ENCODE measurements at regions of chr17 and their contacts with region 1.

Region 1: DNA sequence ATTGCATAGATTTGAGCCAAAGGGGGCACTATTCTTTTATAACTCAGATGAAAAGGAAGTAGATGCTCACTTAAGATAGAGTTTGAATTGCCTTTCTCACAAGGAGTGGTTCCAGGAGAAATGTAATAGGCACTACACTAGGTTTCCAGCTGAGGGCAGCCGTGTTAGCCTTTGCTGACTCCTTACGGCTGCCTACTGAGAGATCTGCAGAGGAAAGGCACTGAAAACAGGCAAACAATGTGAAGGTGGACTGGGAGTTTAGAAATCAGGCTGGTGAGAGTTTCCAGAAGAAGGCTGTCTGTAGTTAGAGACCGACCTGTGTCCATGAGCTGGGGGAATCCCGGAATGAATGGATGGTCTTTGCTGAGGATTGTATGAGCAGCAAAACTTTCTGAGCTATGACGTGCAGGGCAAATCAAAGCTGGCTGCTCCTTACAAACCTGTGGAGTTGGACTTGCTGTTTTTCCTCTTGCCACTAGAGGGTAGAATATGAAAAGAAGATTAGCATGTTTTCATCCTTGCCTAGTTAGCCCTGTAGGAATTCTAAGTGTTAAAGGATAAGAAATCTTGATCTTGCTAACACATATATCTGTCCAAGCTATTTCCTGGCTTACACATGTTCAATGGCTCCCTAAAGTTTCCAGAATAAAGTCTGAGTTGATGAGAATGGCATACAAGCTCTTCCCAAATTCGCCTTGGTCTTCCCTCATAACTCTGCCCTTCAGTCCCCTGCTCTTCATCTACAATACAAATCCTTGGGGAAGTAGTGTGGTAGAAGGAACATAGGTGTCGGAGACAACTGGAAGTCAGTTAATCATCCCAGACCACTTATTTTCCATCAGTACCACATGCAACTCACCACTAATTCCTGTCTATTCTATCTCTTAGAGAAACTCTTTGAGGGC is 20.1 kb upstream of the TAOK1 start:
- DNase-seq: peak; percentile 59
- H3K4me3 Mint-ChIP-seq: no peak overlapping the region
- H3K27ac Mint-ChIP-seq: no peak overlapping the region
- H3K4me1 Mint-ChIP-seq: no peaks in the 10 kb centered on the region
- H3K27me3 Mint-ChIP-seq: no peaks in the 10 kb centered on the region

Region 2: DNA sequence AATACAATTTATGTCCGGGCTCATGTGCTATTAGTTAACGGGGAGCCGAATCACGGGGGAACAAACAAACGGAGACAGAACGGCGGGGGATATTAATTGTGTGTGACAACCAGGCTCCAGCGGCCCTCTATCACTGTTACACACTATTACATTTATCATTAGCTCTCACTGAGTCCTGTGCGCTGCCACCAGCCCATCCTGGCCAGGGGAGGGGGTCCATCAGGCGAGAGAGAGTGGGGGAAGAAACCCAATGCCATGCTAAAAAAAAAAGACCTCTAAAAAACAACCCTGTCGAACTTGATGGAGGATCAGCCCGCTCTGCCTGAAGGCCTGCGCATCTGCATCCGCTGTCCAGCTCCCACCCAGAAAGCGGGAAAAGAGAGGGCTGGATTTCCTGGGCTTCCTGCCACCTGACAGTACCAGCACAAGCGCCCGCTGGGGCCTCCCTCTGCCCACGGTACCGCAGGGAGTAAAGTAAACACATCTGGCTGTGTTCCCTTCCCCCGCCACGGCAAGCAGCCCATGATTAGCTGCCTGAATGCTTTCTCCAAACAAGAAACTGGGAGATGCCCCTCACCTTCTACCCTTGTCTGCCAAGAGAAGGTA is 285.4 kb before region 1 on chr17:
- CTCF ChIA-PET with region 1: no interaction called
- intact Hi-C with region 1: no loop called
- DNase-seq: no peak
- H3K4me3 Mint-ChIP-seq: no peak overlapping the region
- H3K27ac Mint-ChIP-seq: no peak overlapping the region
- H3K4me1 Mint-ChIP-seq: no peaks in the 10 kb centered on the region
- H3K27me3 Mint-ChIP-seq: no peaks in the 10 kb centered on the region

Region 3: DNA sequence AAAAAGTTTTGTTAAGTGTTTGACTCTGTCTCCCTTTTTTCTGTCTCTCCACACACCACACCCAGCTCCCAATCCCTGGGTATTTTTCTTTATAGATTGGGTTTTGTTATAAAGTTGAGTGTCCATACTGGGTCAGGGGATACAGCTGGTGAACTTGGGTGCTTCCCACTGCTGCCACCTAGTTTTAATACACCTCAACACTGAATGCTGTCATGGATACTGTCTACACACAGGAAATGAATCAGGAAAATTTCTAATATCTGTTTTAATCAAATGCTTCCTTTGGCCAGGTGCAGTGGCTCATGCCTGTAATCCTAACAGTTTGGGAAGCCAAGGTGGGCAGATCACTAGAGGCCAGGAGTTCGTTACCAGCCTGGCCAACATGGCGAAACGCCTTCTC is 14.8 kb after region 1 on chr17:
- CTCF ChIA-PET with region 1: interaction called, 25 read pairs
- intact Hi-C with region 1: no loop called
- DNase-seq: no peak
- H3K4me3 Mint-ChIP-seq: no peak overlapping the region
- H3K27ac Mint-ChIP-seq: no peak overlapping the region
- H3K4me1 Mint-ChIP-seq: peaks cover 7% of the 10 kb centered on the region
- H3K27me3 Mint-ChIP-seq: no peaks in the 10 kb centered on the region

Region 4: DNA sequence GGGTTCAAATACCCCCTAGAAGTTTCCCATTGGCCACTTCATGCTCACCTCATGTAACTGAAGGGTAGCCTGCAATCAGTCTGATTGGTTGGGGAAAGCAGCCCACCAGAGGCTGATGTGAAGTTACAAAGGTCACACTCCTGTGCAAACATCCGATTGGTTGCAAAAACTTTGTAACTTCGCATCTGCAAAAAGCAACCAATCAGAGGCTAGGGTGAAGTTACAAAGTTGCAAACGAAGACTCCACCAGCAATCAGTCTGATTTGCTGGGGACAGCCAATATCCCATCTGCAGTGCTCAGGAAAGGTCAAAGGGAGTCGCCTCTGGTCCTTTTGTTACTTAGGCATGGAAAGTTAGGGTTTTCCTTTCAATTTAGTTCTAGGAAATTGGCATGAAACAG is 60.2 kb after region 1 on chr17:
- CTCF ChIA-PET with region 1: no interaction called
- intact Hi-C with region 1: no loop called
- DNase-seq: no peak
- H3K4me3 Mint-ChIP-seq: no peak overlapping the region
- H3K27ac Mint-ChIP-seq: no peak overlapping the region
- H3K4me1 Mint-ChIP-seq: peaks cover 16% of the 10 kb centered on the region
- H3K27me3 Mint-ChIP-seq: no peaks in the 10 kb centered on the region

Region 5: DNA sequence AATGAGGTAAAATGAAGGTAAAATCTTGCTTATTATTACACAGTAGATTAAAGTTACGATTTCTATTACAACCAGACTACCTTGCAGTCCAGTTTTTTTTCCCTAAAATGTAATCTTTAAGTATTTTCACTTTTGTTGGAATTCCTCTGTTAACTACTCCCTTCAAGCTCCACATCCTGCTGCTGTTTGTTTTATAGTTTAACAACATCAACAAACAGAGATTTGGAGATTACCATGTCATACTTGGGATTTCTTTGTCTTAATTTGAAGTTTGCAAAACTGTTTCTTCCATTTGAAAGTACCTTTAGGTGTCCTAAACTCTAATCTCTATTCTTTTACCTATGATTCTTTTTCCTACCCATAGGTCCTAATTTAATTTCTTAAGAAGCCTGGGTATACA is 113.4 kb after region 1 on chr17:
- CTCF ChIA-PET with region 1: interaction called, 10 read pairs
- intact Hi-C with region 1: no loop called
- DNase-seq: no peak
- H3K4me3 Mint-ChIP-seq: no peak overlapping the region
- H3K27ac Mint-ChIP-seq: no peak overlapping the region
- H3K4me1 Mint-ChIP-seq: no peaks in the 10 kb centered on the region
- H3K27me3 Mint-ChIP-seq: no peaks in the 10 kb centered on the region

Region 6: DNA sequence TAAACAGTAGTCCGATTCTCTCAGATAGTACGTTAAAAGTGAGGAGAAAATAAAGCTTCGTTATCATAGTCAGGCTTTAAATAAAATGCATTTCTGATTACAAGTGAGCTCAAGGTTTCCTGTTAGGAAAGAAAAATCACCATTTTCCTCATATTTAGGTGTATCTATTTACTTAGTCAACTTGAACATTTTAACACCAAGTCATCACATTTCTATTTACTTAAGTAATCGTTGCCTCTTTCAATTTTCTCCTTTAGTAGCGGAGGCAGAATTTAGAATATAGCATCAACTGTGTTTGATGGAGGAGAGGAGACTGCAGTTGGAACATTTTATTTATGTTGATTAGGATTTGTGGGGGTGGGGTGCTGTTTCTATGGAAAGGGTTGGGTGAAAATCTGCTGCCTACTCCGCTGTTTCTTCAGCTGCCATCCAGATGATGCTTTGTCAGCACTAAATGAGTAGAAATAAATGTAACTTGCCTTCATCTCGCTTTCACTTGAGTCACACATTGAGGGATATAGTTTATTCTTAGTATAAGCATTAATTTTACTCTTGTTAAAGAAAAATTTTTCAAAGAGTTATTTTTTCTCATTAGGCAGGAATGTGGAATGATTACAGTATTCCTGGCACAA is 154.5 kb after region 1 on chr17:
- CTCF ChIA-PET with region 1: interaction called, 25 read pairs
- intact Hi-C with region 1: no loop called
- DNase-seq: no peak
- H3K4me3 Mint-ChIP-seq: no peak overlapping the region
- H3K27ac Mint-ChIP-seq: no peak overlapping the region
- H3K4me1 Mint-ChIP-seq: no peaks in the 10 kb centered on the region
- H3K27me3 Mint-ChIP-seq: no peaks in the 10 kb centered on the region

Region 7: GRCh38 chr17:29533976-29534375 is 163.9 kb after region 1 on chr17:
- CTCF ChIA-PET with region 1: interaction called, 65 read pairs
- intact Hi-C with region 1: loop called (anchors 1 kb)
- DNase-seq: no peak
- H3K4me3 Mint-ChIP-seq: no peak overlapping the region
- H3K27ac Mint-ChIP-seq: no peak overlapping the region
- H3K4me1 Mint-ChIP-seq: no peaks in the 10 kb centered on the region
- H3K27me3 Mint-ChIP-seq: no peaks in the 10 kb centered on the region

Region 8: GRCh38 chr17:29568331-29569244 is 198.5 kb after region 1 on chr17 and contains the start of gene TP53I13:
- CTCF ChIA-PET with region 1: interaction called, 37 read pairs
- intact Hi-C with region 1: loop called (anchors 1 kb)
- DNase-seq: peak; percentile 91
- H3K4me3 Mint-ChIP-seq: peak within 1 kb of the TSS; percentile 94
- H3K27ac Mint-ChIP-seq: peak within 1 kb of the TSS; percentile 88
- H3K4me1 Mint-ChIP-seq: peaks cover 12% of the 10 kb centered on the region
- H3K27me3 Mint-ChIP-seq: no peaks in the 10 kb centered on the region
- total RNA-seq, gene TP53I13: 30.9 to 37.2 TPM

Region 9: GRCh38 chr17:29589524-29590410 is 219.7 kb after region 1 on chr17 and contains the start of gene GIT1:
- CTCF ChIA-PET with region 1: interaction called, 19 read pairs
- intact Hi-C with region 1: loop called (anchors 1 kb)
- DNase-seq: peak; percentile 84
- H3K4me3 Mint-ChIP-seq: peak within 1 kb of the TSS; percentile 93
- H3K27ac Mint-ChIP-seq: peak within 1 kb of the TSS; percentile 88
- H3K4me1 Mint-ChIP-seq: peaks cover 70% of the 10 kb centered on the region
- H3K27me3 Mint-ChIP-seq: no peaks in the 10 kb centered on the region
- total RNA-seq, gene GIT1: 35.5 to 37.5 TPM